ENCODE measurements at regions of chr10 and their contacts with region 1.

Region 1: DNA sequence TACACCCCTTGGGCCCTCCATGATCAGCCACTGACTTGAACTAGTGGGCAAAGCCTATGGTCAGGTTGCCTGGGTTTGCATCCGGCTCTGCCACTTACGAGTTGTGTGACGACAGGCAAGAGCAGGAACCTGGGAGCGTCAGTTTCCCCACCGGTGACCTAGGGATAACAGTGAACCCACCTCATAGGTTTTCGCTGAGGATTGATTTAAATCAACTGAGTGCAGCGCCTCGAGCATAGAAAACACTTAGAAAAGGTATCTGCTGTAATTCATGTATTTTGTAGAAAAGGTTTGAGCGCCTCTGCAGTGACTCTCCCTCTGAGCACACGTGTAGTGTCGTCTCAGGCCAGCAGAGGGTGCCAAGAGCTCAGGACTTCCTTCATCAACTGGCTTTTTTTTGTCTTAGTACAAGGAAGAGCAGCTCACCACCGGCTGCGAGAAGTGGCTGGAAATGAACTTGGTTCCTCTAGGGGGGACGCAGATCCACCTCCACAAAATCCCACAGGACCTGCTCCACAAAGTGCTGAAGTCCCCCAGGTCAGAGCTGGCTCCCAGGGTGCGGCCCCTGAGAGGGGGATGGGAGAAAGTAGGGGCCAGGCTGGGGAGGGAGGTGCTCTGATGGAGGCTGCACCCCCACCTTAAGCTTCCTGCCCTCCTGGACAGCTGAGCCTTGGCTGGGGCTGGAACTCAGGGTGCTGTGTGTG is 27.7 kb downstream of the BTBD16 start:
- DNase-seq: peak; percentile 43 to 96 (median 78)

Region 2: DNA sequence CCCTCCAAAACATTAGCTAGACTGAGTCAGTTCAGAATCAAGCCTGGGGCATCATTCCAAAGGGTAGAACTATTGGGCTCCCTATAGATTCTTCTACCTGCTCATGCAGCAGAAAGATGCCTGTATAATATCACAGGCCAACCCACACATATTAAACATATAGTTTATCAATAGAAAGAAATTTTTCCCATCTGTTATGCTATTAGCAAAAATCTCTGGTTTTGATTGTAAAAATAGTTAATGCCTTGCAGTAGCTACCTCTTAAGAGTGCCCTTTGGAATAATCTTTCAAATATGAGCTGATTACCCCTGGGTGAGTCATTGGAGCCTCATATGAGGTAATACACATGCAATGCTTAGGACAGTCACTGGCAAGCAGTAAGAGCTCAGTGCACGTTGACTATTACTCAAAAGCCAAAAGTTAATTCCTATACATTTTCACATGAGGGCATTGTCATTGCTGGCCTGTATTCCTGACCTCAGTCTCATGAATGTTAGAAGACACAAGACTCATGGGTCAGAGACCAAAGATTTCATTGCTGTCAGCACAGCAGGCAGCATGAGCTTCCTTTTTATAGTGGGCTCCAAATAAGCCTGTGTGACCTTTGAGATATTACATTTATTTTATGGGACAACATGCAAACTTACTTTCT is 880.5 kb before region 1 on chr10:
- intact Hi-C with region 1: no loop called
- DNase-seq: no peak

Region 3: GRCh38 chr10:121764233-121764942 is 534.4 kb before region 1 on chr10:
- intact Hi-C with region 1: no loop called
- DNase-seq: no peak

Region 4: DNA sequence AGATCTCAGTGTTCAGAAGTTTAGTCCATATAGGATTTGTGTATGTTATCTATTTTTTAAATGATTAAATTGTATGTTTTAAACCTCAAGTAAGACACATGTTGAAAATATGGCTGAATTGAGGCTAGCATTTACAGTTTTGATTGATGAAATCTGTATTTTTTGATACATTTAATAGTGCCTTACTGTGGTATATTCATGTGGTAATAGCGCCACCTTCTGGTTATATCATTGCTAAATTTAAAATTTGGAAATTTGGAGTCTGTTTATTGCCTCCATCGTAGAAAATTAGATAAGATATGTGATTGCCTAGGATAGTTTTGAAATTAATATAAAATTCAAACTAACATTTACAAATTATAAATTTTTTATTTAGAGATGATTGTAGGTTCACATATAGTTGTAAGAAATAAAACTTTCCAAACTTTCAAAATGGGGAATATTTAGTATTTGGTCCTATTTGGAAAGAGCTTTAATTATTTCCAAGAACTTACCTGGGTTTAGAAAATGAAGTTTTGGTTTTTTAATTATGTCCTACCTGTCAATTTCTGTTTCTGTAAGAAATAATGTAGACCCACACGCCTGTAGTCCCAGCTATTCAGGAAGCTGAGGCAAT is 136.6 kb after region 1 on chr10:
- intact Hi-C with region 1: loop called (anchors 1 kb)
- DNase-seq: no peak

Measured in posterior cingulate gyrus (tissue), 11 donors.